ENCODE measurements at regions of chr6 and their contacts with region 1.

Region 1: DNA sequence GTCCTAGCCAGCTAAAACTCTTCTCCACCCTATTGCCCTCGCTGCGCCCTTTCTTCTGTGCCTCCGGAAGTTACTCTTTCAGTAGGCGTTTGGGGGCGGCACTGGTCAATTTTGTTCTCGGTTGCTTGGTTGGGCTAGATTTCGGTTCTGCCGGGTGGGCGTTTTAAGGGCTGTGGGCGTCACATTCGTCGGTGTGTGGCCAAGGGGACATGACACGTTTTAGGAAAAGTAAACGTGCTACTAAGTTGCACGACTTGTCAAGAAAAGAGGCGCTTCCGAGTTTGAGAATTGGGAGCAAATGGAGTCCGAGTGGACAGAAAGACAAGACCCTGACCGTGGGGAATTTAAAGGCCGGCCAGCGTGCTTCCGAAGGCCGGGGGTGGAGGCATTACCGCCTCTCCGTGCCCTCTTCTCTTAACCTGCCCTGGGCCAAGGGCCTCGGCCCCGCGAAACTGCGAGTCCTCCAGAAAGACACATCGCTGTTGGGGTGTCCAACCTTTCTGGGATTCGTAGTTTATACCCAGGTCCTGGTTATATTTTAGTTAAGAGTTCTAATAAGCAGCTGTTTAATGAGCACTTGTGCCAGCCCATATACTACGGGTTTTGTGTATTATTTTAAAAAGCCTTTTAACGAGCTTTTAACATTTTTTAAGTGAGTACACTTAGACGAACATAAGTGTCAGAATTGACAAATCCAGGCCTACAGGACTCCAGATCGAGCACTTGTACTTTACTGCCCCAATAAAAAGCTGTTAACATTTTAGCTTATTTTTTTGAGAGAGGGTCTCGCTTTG is 661 bp upstream of the BAG6 start:
- DNase-seq: peak; percentile 64 to 89 (median 86)
- H3K4me3 ChIP-seq: peak overlapping the region; percentile 62 to 100 (median 83)
- H3K27ac ChIP-seq: peak overlapping the region; percentile 84 to 100 (median 99)
- H3K27me3 ChIP-seq: no peaks in the 10 kb centered on the region
- CTCF ChIP-seq: peak in 20 of 56 donors; percentile 6 to 46 (median 23)

Region 2: DNA sequence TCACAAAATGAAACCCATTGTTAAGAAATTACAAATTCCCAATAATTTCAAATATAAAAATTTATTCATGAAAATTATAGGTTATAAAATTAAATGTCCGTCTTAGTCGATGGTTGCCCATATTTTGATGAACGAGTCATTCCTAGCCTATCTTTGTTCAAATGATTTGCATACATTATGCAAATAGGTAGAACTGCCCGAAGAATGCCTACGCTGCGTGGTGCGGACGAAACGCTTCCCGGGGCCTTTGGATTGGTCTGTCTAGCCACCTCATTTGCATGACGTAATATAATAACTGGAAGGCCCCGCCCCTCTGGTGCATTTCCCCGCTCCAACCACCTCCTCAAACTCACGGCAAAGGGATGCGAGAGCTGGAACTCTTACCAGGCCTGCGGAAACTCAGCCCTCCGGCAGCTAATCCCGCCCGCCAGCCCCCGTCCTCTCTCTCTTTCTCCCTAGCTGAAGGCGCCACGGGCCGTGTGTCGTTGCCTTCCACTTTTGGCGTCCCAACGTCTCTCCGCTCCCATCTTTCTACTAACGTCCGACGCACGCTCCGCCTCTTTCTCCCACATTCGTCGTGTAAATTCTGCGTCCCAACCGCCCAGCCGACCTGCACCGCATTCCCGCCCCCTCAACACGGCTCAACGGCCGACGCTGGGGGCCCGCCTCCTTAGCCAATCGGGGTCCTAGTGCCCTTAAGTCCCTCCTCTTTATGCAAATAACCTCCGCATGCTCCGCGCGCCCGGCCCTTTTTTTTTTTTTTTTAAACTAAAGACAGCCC is 33.1 kb before region 1 on chr6:
- intact Hi-C with region 1: loop called (anchors 1 to 2 kb)
- DNase-seq: peak; percentile 89 to 99 (median 98)
- H3K4me3 ChIP-seq: peak overlapping the region; percentile 61 to 95 (median 81)
- H3K27ac ChIP-seq: peak overlapping the region; percentile 51 to 100 (median 97)
- H3K27me3 ChIP-seq: no peaks in the 10 kb centered on the region
- CTCF ChIP-seq: peak in 6 of 56 donors; percentile 8 to 28 (median 14)

Region 3: DNA sequence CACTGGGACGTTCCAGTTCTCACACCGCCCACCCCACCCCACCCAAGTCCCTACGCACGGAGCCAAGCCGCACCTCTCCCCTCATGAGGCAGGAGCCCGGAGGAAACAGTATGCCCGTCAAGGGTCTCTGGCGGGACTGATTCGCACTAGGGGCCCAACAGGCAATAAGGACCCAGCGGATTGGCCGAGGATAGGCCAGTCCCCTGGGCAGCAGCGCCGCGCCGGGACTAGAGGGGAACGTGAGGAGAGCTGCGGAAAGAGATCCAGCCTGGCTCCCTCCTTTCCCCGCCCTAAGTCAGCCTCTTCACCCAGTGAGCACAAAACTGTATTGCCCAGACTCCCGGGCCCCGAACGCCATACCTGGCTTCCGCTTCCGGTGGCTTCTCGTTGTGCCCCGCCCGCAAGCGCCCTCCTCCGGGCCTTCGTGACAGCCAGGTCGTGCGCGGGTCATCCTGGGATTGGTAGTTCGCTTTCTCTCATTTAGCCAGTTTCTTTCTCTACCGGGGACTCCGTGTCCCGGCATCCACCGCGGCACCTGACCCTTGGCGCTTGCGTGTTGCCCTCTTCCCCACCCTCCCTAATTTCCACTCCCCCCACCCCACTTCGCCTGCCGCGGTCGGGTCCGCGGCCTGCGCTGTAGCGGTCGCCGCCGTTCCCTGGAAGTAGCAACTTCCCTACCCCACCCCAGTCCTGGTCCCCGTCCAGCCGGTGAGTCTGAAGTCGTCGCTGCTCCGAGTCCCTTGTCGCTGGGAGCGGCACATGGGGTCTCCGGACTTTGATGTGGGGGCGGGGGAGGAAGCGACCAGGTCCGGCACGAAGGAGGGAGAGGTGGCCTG is 12.6 kb after region 1 on chr6 and contains the start of gene CSNK2B:
- intact Hi-C with region 1: loop called in 1 of 2 experiments (anchors 1 kb)
- DNase-seq: peak; percentile 99 to 100 (median 100)
- H3K4me3 ChIP-seq: peak within 1 kb of the TSS; percentile 60 to 100 (median 89)
- H3K27ac ChIP-seq: peak within 1 kb of the TSS; percentile 75 to 98 (median 93)
- H3K27me3 ChIP-seq: no peaks in the 10 kb centered on the region
- CTCF ChIP-seq: peak in 27 of 56 donors; percentile 1 to 51 (median 21)
- total RNA-seq, gene CSNK2B: 85.2 to 151 (median 118) TPM

Region 4: DNA sequence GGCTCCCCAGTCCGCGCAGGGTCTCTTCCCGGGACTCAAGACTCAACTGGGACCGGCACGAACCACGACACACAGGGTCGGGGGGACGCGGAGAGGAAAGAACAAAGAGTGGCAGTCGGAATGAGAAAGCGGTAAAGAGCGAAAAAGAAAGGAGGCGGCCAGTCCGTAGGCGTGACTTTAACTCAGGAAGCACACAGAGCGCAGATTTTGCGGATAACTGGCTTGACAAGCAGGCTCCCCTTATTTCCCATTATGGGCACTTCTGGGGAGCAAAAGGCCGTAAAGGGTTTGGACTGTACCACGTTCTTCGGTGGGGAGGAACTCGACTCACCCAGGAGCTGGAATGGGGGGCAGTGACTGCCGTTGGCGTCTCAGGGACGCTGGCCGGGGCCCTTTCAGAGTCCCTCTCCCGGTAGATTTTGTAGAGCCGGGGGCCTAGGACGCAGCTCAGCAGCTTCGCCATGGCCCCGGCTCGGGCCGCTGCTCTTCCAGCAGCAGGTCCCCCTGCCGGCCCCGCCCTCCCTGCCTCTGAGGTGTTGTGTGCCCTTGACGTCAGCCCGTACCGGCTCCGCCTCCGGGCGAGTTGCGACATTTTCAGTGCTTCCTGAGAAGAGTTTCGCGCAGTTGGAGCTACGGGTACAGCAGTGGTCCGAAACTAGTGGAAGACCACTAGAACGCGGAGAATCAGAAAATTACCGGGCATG is 49.8 kb after region 1 on chr6 and contains the start of gene ABHD16A:
- intact Hi-C with region 1: loop called in 1 of 2 experiments (anchors 5 kb)
- DNase-seq: peak; percentile 98 to 99 (median 99)
- H3K4me3 ChIP-seq: peak within 1 kb of the TSS; percentile 69 to 98 (median 88)
- H3K27ac ChIP-seq: peak within 1 kb of the TSS; percentile 58 to 99 (median 97)
- H3K27me3 ChIP-seq: no peaks in the 10 kb centered on the region
- CTCF ChIP-seq: peak in 38 of 56 donors; percentile 7 to 49 (median 33)
- total RNA-seq, gene ABHD16A: 43.5 to 81.1 (median 56.8) TPM

Region 5: GRCh38 chr6:31834434-31835198 is 181.5 kb after region 1 on chr6:
- intact Hi-C with region 1: no loop called
- DNase-seq: peak; percentile 77 to 89 (median 86)
- H3K4me3 ChIP-seq: peak overlapping the region; percentile 72 to 100 (median 94)
- H3K27ac ChIP-seq: peak overlapping the region; percentile 79 to 99 (median 97)
- H3K27me3 ChIP-seq: no peaks in the 10 kb centered on the region
- CTCF ChIP-seq: peak in 26 of 56 donors; percentile 5 to 48 (median 22)

Measured in dorsolateral prefrontal cortex (tissue), 120 donors.